Lower lobe of right lung (tissue), 2 donors: ENCODE measurements at regions of chr4 and their contacts with region 1.

Region 1: DNA sequence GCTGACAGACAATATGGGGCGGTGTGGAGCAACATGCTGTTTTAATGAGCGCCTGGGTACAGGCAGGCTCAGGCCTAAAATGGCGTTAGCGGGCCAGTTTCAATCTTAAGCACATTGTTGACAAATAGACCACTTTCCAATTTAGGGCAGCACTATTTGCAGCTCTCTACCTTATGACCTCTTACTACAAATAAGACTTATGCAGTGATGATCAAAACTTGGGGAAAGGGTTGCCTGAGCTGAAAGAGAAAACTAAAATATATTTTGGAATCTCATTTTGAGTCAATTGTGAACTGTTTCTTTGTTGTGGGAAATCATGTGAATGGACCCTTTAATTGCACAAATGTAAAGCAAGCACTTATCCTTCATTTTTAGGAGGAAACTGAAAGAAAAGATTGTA is 25.5 kb upstream of the GPAT3 start:
- DNase-seq: no peak
- ATAC-seq: no peak
- H3K4me3 ChIP-seq: no peak overlapping the region
- H3K27ac ChIP-seq: no peak overlapping the region
- H3K4me1 ChIP-seq: no peaks in the 10 kb centered on the region
- H3K27me3 ChIP-seq: no peaks in the 10 kb centered on the region
- CTCF ChIP-seq: no peak

Region 2: GRCh38 chr4:82989575-82990429 is 520.6 kb before region 1 on chr4:
- intact Hi-C with region 1: no loop called
- DNase-seq: no peak
- ATAC-seq: peak in 1 of 2 donors; percentile 33
- H3K4me3 ChIP-seq: no peak overlapping the region
- H3K27ac ChIP-seq: no peak overlapping the region
- H3K4me1 ChIP-seq: peaks cover 12% of the 10 kb centered on the region
- H3K27me3 ChIP-seq: no peaks in the 10 kb centered on the region
- CTCF ChIP-seq: no peak

Region 3: DNA sequence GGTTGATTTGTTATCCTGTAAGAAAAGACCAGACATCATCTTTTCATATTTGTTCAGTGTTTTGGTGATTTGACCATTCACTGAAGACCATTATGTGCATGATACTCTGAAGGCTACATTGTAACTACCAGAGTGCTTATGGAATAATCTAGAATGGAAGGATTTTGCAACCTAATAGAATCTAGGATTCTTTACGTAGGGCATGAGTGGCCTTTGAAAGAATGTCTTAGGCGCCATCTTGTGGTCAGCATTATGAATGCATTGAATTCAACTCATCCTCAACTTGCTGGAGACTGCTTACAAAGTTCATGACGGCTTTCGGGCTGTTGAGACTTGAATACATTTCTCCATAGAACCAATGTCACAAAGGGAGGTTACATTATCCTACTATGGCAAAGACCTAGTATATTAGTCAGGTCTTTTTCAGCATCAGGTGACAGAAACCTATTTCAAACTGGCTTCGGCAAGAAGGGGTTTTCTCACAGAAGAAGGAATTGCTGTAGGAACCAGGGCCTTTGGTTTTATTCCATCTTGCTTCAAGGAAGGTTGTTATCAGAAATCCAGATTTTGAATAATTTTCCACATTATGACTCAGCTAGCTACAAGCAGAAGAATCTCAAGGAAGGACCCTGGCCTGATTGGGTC is 129.5 kb after region 1 on chr4:
- intact Hi-C with region 1: loop called (anchors 5 kb)
- DNase-seq: no peak
- ATAC-seq: peak; percentile 82 to 88
- H3K4me3 ChIP-seq: no peak overlapping the region
- H3K27ac ChIP-seq: no peak overlapping the region
- H3K4me1 ChIP-seq: no peaks in the 10 kb centered on the region
- H3K27me3 ChIP-seq: no peaks in the 10 kb centered on the region
- CTCF ChIP-seq: peak; percentile 79